ENCODE measurements at regions of chr3 and their contacts with region 1.

Region 1: DNA sequence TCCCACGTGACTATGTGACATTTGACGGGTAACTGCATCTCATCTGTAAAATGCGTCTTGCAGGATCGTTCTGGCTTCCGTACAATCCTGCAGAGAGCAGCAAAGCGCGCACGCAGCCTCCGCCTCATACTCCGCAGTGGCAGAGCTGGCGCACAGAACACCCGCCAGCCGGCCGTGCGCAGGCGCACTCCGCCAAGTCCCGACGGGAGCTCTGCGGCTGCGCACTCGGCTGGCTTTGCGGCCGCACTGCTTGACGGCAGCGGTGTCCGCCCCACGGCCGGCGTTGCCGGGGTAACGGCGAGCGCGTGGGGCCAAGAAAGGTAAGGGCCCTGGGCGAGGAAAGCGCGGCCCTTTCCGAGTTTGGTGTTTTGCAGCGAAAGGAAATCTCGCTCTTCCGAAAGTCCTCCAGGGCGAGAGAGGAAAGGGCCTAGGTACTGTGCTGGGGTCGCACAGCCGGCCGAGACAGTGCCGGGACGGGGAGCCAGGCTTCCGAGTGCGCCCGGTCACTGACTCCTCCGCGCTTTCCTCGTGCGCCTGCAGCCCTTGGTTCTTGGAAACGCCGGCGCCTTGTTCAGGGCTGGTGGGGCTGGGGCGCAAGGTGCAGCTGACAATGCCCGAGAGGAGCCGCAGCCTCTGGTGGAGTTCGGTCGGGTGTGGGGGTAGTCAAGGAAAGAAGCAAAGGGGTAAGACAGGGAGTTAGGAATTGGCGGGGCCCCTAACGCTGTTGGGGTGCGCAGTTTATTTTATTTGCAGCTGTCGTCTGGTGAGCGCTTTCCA is at the start of gene TSEN2:
- DNase-seq: peak; percentile 97
- H3K4me3 ChIP-seq: peak within 1 kb of the TSS; percentile 92
- H3K27ac ChIP-seq: peak within 1 kb of the TSS; percentile 79
- H3K4me1 ChIP-seq: peaks cover 25% of the 10 kb centered on the region
- CTCF ChIP-seq: 0 out of 2 replicates have a peak, but pooled peaks have one; percentile 31
- total RNA-seq, gene TSEN2: 33.2 and 40.7 TPM in 2 replicates

Region 2: DNA sequence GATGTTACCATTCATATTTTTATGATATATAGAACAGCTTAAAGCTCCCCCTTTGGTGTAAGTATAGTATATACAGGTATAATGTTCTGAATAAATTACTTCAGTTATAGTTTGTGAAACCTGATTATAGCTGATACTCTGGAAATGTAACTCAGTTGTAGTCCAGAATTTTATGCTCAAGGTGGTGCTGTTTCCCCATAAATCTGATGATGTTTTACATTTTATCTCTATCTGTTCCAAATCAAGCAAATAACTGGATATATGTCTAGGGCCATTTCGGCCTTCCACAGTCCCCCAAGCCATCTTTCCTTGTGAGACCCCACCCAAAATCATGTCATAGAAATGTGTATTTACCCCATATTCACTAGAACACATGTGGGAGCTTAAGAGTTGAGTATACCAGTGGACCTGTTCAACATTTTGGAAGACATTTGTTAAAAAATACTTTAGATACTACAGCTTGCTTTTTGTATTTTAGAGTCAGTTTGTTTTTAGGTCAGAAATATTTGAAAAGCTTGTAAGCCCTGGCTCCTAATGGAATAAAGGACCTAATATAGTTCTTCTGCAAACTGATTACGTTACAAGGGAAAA is 1105.1 kb before region 1 on chr3:
- CTCF ChIA-PET with region 1: no interaction called
- POLR2A ChIA-PET with region 1: no interaction called
- intact Hi-C with region 1: loop called (anchors 10 kb)
- DNase-seq: peak; percentile 53
- H3K4me3 ChIP-seq: no peak overlapping the region
- H3K27ac ChIP-seq: no peak overlapping the region
- H3K4me1 ChIP-seq: peaks cover 7% of the 10 kb centered on the region
- CTCF ChIP-seq: peak; percentile 88

Region 3: GRCh38 chr3:12135029-12135657 is 349.2 kb before region 1 on chr3:
- CTCF ChIA-PET with region 1: interaction called, 10 read pairs
- POLR2A ChIA-PET with region 1: no interaction called
- intact Hi-C with region 1: loop called (anchors 1 kb)
- DNase-seq: peak; percentile 53
- H3K4me3 ChIP-seq: no peak overlapping the region
- H3K27ac ChIP-seq: no peak overlapping the region
- H3K4me1 ChIP-seq: no peaks in the 10 kb centered on the region
- CTCF ChIP-seq: peak; percentile 91

Region 4: GRCh38 chr3:12193485-12194165 is 290.8 kb before region 1 on chr3:
- CTCF ChIA-PET with region 1: no interaction called
- POLR2A ChIA-PET with region 1: no interaction called
- intact Hi-C with region 1: loop called (anchors 5 kb)
- DNase-seq: no peak
- H3K4me3 ChIP-seq: no peak overlapping the region
- H3K27ac ChIP-seq: no peak overlapping the region
- H3K4me1 ChIP-seq: peaks cover 3% of the 10 kb centered on the region
- CTCF ChIP-seq: no peak

Region 5: DNA sequence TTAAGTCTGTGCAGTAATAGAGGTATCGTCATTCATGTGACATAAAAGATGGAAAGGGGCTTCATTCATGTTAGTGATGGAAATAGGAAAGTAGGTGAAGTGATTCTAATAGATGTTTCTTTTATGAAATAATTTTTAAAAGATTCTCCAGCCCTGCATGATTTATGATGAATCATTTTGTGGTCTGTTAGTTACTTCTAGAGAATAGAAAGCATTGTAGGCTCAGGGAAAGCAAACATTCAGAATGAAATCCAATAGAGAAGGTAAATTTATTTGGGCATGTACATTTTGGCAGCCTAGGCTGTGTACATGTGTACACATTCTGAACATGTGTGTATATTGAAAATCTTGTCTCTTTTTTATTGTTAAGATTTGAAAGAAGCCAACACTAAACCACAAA is 172.4 kb before region 1 on chr3:
- CTCF ChIA-PET with region 1: no interaction called
- POLR2A ChIA-PET with region 1: no interaction called
- intact Hi-C with region 1: no loop called
- DNase-seq: no peak
- H3K4me3 ChIP-seq: no peak overlapping the region
- H3K27ac ChIP-seq: no peak overlapping the region
- H3K4me1 ChIP-seq: no peaks in the 10 kb centered on the region
- CTCF ChIP-seq: no peak

Region 6: DNA sequence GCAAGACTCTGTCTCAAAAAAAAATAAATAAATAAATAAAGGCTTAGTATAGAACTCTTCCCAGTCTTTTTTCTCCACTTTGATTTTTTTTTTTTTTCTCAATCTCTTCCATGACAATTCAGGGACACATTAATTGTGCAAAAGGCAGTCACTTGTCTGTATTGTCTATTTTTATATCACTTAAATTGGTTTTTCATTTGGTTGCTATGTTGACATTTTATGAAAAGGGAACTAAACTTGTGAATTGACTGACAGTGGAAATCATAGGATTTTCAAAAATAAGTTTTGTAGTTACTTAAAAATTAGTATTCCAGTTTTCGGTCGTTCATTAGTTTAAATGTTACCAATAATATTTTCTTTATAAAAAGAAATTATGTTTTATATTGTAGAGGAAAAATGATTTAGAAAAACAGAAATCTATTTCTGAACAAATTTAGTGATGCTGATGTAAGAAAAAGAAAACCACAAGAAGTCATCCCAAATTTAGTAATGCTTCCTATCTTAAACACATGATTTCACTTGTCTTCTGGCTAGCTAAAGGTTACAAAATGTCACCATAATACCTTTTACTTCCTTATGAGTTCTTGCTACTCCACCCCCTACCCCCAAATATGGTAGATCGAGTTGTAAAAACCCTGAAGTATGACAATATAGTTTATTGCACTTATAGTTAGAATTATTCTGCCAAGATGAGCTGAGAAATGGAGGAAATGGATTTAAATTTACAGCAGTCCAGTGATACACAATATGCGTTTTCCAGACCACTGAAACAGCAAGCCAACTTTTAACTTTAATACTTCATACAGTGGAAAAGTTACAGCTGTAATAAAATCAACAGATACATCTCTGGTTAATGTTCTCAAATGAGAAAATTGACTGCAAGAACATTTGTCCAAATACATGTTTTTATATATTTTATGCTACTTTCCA is 158.5 kb before region 1 on chr3:
- CTCF ChIA-PET with region 1: no interaction called
- POLR2A ChIA-PET with region 1: no interaction called
- intact Hi-C with region 1: no loop called
- DNase-seq: no peak
- H3K4me3 ChIP-seq: no peak overlapping the region
- H3K27ac ChIP-seq: no peak overlapping the region
- H3K4me1 ChIP-seq: no peaks in the 10 kb centered on the region
- CTCF ChIP-seq: no peak

Region 7: DNA sequence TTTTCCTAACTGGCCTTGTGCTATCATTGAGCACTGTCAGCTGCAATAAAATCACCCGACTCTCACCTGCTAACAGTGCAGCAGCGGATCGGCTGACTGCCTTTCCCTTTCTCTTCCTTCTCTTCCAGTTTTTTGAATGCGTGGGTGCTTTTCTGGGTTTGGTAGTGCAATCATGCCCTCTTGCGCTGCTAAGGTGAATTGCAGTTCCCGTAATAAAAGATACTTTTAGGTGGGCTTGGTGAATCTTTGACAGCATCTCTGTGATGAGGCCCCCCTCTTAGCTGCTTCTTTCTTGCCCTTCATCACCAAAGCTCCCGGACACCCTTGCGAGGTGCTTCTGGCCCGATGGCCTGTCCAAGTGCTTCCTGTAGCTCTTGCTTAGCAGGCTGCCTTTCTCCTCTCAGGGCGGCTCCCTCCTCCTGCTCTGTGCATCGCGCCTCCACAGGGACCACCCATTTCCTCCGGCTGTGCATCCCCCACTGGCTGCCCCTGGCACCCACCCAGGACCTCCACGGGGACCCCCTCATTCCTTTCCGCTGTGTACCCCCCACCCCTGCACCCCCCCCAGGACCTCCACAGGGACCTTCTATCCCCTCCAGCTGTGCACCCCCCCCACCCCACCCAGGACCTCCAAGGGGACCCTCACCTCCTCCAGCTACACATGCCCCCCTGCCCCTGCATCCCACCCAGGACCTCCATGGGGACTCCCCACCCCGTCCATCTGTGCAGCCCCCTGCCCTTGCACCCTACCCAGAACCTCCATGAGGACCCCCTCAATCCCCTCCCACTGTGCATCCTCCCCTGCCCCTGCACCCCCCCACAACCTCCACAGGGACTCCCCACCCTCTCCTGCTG is 407.8 kb after region 1 on chr3:
- CTCF ChIA-PET with region 1: no interaction called
- POLR2A ChIA-PET with region 1: no interaction called
- intact Hi-C with region 1: loop called (anchors 5 kb)
- DNase-seq: peak; percentile 70
- H3K4me3 ChIP-seq: no peak overlapping the region
- H3K27ac ChIP-seq: no peak overlapping the region
- H3K4me1 ChIP-seq: peaks cover 4% of the 10 kb centered on the region
- CTCF ChIP-seq: peak; percentile 95

Region 8: GRCh38 chr3:13091898-13092611 is 607.7 kb after region 1 on chr3:
- CTCF ChIA-PET with region 1: no interaction called
- POLR2A ChIA-PET with region 1: no interaction called
- intact Hi-C with region 1: no loop called
- DNase-seq: peak; percentile 81
- H3K4me3 ChIP-seq: no peak overlapping the region
- H3K27ac ChIP-seq: no peak overlapping the region
- H3K4me1 ChIP-seq: peaks cover 29% of the 10 kb centered on the region
- CTCF ChIP-seq: peak; percentile 91

Measured in OCI-LY7 (cell line).